H1 (cell line): ENCODE measurements at regions of chr3 and their contacts with region 1.

Region 1: DNA sequence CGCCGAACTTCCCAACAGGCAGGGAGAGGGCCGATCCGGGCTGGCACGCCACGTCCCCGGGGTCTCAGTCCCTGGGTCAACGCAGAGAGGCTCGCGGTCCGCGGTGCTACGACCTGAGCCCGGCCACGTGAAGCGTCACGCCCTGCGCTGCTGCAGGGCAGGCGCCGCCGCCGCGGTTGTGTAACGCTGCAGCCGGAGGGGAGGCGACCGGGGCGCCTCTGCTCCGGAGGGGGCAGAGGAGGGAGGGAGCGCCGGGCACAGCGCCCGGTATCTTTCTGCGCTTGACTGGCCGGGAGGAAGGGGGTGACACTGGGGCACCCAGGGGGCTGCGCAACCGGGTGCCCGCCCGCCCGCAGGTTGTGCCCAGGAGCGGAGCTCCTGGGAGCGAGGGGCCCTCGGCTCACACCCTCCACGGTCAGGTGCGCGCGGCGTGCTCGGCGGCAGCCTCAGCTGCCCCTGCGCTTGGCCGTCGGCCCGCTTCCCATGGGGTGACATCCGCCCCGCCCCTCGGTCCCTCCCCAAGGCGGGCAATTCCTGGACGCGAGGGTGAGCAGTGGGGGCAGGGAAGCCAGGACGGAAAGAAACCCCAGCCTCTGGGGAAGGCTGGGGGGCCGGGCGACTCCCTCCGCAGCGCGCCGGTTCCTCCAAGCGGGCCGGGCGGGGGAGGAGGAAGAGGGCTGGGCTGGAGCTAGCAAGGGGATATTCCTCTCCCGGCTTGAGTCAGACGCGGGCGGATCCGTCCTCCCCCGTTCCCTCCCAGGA is 852 bp upstream of the BHLHE40 start:
- DNase-seq: peak; percentile 70 to 85
- H3K4me3 ChIP-seq: peak overlapping the region; percentile 51 to 71 (median 58)
- H3K27ac ChIP-seq: no peak overlapping the region
- H3K4me1 ChIP-seq: peaks cover 2 to 8% (median 4%) of the 10 kb centered on the region in 4 experiments; a peak in 5 of 7 replicates
- H3K27me3 ChIP-seq: peaks cover 4 to 36% (median 22%) of the 10 kb centered on the region in 4 experiments
- CTCF ChIP-seq: no peak
- EP300 ChIP-seq: no peak
- POLR2A ChIP-seq: no peak
- RAD21 ChIP-seq: 0 out of 4 replicates have a peak, but pooled peaks of 1 of the 2 experiments have one; percentile 3

Region 2: DNA sequence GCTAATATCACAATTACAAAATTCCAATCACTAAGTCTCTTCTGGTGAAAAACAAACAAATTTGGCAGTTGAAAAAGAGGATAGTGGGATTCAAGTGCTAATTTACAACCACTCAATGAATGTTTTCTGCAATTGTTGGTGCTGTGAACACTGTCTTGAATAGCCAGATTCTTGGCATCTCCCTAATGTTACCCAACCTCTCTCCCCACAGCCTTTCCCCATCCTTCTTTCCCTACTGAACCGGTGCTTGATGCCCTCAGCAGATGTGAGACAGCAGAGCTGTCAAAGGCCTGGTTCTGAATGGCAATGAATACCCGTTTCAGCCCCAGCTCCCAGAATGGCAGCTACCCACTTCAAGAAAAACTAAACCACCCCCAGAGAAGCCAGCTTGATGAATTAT is 21.6 kb before region 1 on chr3:
- CTCF ChIA-PET with region 1: interaction called, 11 read pairs
- POLR2A ChIA-PET with region 1: no interaction called
- DNase-seq: no peak
- H3K4me3 ChIP-seq: no peak overlapping the region
- H3K27ac ChIP-seq: no peak overlapping the region
- H3K4me1 ChIP-seq: no peaks in the 10 kb centered on the region
- H3K27me3 ChIP-seq: no peaks in the 10 kb centered on the region
- CTCF ChIP-seq: no peak
- EP300 ChIP-seq: no peak
- POLR2A ChIP-seq: no peak
- RAD21 ChIP-seq: no peak

Region 3: DNA sequence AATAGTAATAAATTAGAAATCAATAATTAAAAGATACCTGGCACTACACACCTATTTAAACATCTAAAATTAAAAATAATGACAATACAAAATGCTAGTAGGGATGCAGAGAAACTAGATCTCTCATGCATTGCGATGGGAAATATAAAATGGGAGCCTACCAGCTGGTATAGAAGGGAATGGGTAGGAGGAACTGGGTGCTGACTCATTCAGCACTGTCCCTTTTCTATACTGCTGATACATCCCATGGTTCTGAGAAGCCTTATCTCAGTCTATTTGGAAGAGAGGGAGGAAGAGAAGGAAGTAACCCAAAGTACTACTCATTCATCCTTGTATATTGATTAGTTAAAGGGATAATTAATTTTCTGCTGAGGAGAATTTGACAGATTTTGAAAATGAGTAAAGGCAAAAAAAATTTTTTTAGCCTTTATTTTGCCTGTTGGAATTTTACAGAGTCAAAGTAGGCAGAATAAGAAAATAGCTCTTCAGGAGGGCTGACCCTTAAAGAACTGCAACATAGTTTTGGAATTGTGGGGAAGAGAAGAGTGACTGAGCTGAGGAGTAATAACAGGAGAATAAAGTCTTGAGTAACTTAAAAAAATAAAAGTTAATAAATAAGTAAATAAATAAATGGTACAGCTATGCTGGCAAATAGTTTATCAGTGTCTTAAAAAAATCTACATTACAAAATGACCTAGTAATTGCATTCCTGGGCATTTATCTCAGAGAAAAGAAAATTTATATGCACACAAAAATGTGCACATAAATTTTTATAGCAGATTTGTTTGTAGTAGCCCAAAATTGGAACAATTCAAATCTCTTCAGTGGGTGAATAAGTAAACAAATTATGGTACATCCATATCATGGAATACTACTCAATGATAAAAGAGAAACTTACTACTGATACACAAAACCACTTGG is 14.5 kb before region 1 on chr3:
- CTCF ChIA-PET with region 1: interaction called, 12 read pairs
- POLR2A ChIA-PET with region 1: no interaction called
- DNase-seq: no peak
- H3K4me3 ChIP-seq: no peak overlapping the region
- H3K27ac ChIP-seq: no peak overlapping the region
- H3K4me1 ChIP-seq: no peaks in the 10 kb centered on the region
- H3K27me3 ChIP-seq: no peaks in the 10 kb centered on the region
- CTCF ChIP-seq: no peak
- EP300 ChIP-seq: no peak
- POLR2A ChIP-seq: no peak
- RAD21 ChIP-seq: no peak

Region 4: GRCh38 chr3:4994823-4995499 is 16.6 kb after region 1 on chr3:
- CTCF ChIA-PET with region 1: interaction called, 14 read pairs
- POLR2A ChIA-PET with region 1: interaction called, 3 read pairs
- DNase-seq: no peak
- H3K4me3 ChIP-seq: no peak overlapping the region
- H3K27ac ChIP-seq: no peak overlapping the region
- H3K4me1 ChIP-seq: peaks cover 0 to 3% (median 1%) of the 10 kb centered on the region in 4 experiments; a peak in 5 of 7 replicates
- H3K27me3 ChIP-seq: no peaks in the 10 kb centered on the region; a peak in 1 of 7 replicates
- CTCF ChIP-seq: no peak
- EP300 ChIP-seq: no peak
- POLR2A ChIP-seq: no peak
- RAD21 ChIP-seq: no peak

Region 5: GRCh38 chr3:5026331-5027218 is 48.2 kb after region 1 on chr3:
- CTCF ChIA-PET with region 1: interaction called, 59 read pairs
- POLR2A ChIA-PET with region 1: interaction called, 4 read pairs
- DNase-seq: peak; percentile 84 to 85
- H3K4me3 ChIP-seq: peak overlapping the region; percentile 21 to 89 (median 63)
- H3K27ac ChIP-seq: no peak overlapping the region
- H3K4me1 ChIP-seq: peaks cover 0 to 5% (median 1%) of the 10 kb centered on the region in 4 experiments; a peak in 2 of 7 replicates
- H3K27me3 ChIP-seq: no peaks in the 10 kb centered on the region
- CTCF ChIP-seq: peak; percentile 67 to 89 (median 73)
- EP300 ChIP-seq: 0 out of 3 replicates have a peak, but pooled peaks of 1 of the 2 experiments have one; percentile 6
- POLR2A ChIP-seq: peak in 1 of 2 experiments; percentile 50; a peak in 1 of 3 replicates
- RAD21 ChIP-seq: peak; percentile 91 to 93

Region 6: DNA sequence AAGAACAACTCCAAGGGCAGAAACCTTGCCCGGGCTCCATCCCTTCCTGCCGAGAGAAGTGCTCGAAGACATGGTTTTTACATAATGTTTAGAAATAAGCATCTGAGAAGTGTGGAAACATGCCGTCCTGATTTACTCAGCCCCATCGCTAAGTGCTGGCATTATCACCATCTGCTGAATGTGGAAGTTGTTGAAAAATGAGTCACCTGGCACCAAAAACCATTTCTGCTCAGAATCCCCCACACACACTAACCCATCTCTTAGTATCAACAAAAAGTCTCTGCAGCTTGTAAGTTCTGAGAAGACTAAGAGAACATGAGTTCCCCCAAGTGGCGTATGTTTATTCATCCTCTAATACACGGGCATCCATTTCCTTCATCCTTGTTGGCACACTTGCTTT is 92.7 kb after region 1 on chr3:
- CTCF ChIA-PET with region 1: no interaction called
- POLR2A ChIA-PET with region 1: no interaction called
- DNase-seq: no peak
- H3K4me3 ChIP-seq: no peak overlapping the region
- H3K27ac ChIP-seq: no peak overlapping the region
- H3K4me1 ChIP-seq: no peaks in the 10 kb centered on the region
- H3K27me3 ChIP-seq: no peaks in the 10 kb centered on the region
- CTCF ChIP-seq: no peak
- EP300 ChIP-seq: no peak
- POLR2A ChIP-seq: no peak
- RAD21 ChIP-seq: no peak